Caco-2 (cell line): ENCODE measurements at regions of chr1 and their contacts with region 1.

Region 1: DNA sequence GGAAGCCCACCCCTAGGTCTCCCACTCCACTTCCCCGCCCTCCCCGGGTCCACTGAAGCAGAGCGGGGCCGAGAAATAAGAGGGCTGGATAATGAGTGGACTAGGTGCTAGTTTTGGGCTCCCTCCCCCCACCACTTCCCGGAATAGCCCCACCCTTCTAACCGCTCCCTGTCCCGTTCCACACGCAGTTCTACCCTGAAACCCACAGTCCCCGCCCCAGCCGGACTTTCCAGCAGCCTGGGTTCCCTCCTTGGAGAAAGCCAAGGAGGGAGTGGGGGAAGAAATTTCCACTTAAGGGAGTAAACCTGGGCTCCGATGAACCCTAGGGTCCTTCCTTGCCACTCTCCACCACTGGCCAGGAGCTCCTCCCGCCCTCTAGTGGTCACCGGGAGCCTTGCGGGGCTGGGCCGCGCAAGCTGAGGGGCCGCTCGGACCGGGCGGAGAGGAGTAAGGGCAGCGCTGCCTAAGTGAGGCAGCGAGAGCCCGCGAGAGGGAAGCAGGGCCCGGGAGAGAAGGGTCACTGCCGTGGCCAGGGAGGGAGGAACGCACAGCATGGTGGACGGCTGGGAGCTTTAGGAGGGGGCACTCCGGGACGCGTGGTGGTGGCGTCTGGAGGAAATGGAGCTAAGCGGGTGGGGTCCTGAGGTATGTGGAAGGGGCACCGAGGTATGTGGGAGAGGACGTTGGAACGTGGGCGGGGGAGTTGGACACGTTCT is 14.3 kb downstream of the THBS3 start:
- DNase-seq: peak; percentile 91 to 96
- H3K4me3 ChIP-seq: peak overlapping the region; percentile 81
- H3K4me3 Mint-ChIP-seq: peak overlapping the region; percentile 98
- H3K27ac Mint-ChIP-seq: peak overlapping the region; percentile 98
- H3K4me1 ChIP-seq: peaks cover 4% of the 10 kb centered on the region; the same call in 1 of the 2 replicates
- H3K4me1 Mint-ChIP-seq: peaks cover 15% of the 10 kb centered on the region
- H3K27me3 ChIP-seq: no peaks in the 10 kb centered on the region
- H3K27me3 Mint-ChIP-seq: no peaks in the 10 kb centered on the region
- CTCF ChIP-seq: peak; percentile 97 to 99

Region 2: GRCh38 chr1:155091071-155091709 is 102.2 kb before region 1 on chr1:
- CTCF ChIA-PET with region 1: interaction called, 15 read pairs
- POLR2A ChIA-PET with region 1: no interaction called
- intact Hi-C with region 1: no loop called
- DNase-seq: peak; percentile 85 to 91
- H3K4me3 ChIP-seq: no peak overlapping the region
- H3K4me3 Mint-ChIP-seq: peak overlapping the region; percentile 47
- H3K27ac Mint-ChIP-seq: no peak overlapping the region
- H3K4me1 ChIP-seq: peaks cover 10% of the 10 kb centered on the region
- H3K4me1 Mint-ChIP-seq: peaks cover 6% of the 10 kb centered on the region
- H3K27me3 ChIP-seq: no peaks in the 10 kb centered on the region
- H3K27me3 Mint-ChIP-seq: no peaks in the 10 kb centered on the region
- CTCF ChIP-seq: peak; percentile 95 to 96

Region 3: GRCh38 chr1:155172732-155173477 is 20.5 kb before region 1 on chr1 and contains the start of gene KRTCAP2:
- CTCF ChIA-PET with region 1: interaction called, 77 read pairs
- POLR2A ChIA-PET with region 1: interaction called, 15 read pairs
- intact Hi-C with region 1: loop called (anchors 2 kb)
- DNase-seq: peak; percentile 94 to 96
- H3K4me3 ChIP-seq: peak within 1 kb of the TSS; percentile 67
- H3K4me3 Mint-ChIP-seq: peak within 1 kb of the TSS; percentile 98
- H3K27ac Mint-ChIP-seq: peak within 1 kb of the TSS; percentile 91
- H3K4me1 ChIP-seq: peaks cover 16% of the 10 kb centered on the region; the same call in 1 of the 2 replicates
- H3K4me1 Mint-ChIP-seq: peaks cover 11% of the 10 kb centered on the region
- H3K27me3 ChIP-seq: no peaks in the 10 kb centered on the region
- H3K27me3 Mint-ChIP-seq: no peaks in the 10 kb centered on the region
- CTCF ChIP-seq: peak; percentile 81 to 93
- total RNA-seq, gene KRTCAP2: 215 and 219 TPM in 2 replicates

Region 4: GRCh38 chr1:155227261-155228095 is 34.0 kb after region 1 on chr1:
- CTCF ChIA-PET with region 1: interaction called, 11 read pairs
- POLR2A ChIA-PET with region 1: interaction called, 6 read pairs
- intact Hi-C with region 1: loop called (anchors 5 kb)
- DNase-seq: peak; percentile 99
- H3K4me3 ChIP-seq: peak overlapping the region; percentile 62
- H3K4me3 Mint-ChIP-seq: peak overlapping the region; percentile 81
- H3K27ac Mint-ChIP-seq: peak overlapping the region; percentile 80
- H3K4me1 ChIP-seq: peaks cover 22% of the 10 kb centered on the region
- H3K4me1 Mint-ChIP-seq: peaks cover 25% of the 10 kb centered on the region
- H3K27me3 ChIP-seq: no peaks in the 10 kb centered on the region
- H3K27me3 Mint-ChIP-seq: no peaks in the 10 kb centered on the region
- CTCF ChIP-seq: no peak